ENCODE measurements at regions of chr10 and their contacts with region 1.

Region 1: GRCh38 chr10:103888113-103888841 is 29.7 kb downstream of the STN1 start:
- DNase-seq: no peak
- ATAC-seq: peak; percentile 80
- H3K4me3 Mint-ChIP-seq: no peak overlapping the region
- H3K27ac Mint-ChIP-seq: peak overlapping the region; percentile 20
- H3K4me1 Mint-ChIP-seq: peaks cover 36% of the 10 kb centered on the region
- H3K27me3 Mint-ChIP-seq: no peaks in the 10 kb centered on the region

Region 2: DNA sequence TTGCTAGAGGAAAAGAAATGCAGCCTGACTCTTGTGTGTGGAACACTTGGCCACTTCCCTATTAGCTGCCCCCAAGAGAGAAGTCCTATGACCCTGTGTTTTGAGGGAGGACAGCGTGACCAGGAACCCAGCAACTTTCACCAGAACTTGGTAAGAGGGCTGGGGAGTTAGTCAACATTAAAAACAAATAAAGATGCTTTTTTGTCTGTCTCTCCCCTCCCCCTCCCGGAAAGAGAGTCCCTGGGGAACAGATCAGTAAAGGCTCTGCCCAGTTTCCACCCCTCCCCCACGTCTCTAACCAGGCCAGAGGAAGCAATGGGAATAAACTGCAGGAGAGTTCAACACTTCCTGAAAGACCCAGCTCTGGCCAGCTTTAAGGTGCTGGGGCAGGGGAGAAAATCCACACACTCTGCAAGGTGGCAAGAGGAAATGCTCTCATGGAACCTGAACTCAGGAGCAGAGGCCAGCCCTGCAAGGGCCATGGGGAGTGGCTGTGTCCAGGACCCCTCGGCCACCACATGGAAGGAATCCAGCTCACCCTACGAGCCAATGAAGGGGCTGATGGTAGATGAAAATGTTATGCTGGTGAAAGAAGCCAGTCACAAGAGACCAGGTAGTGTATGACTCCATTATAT is 54.4 kb before region 1 on chr10:
- CTCF ChIA-PET with region 1: no interaction called
- DNase-seq: no peak
- ATAC-seq: no peak
- H3K4me3 Mint-ChIP-seq: no peak overlapping the region
- H3K27ac Mint-ChIP-seq: no peak overlapping the region
- H3K4me1 Mint-ChIP-seq: no peaks in the 10 kb centered on the region
- H3K27me3 Mint-ChIP-seq: peaks cover 22% of the 10 kb centered on the region

Region 3: GRCh38 chr10:103901299-103901698 is 13.0 kb after region 1 on chr10:
- CTCF ChIA-PET with region 1: interaction called, 13 read pairs
- DNase-seq: no peak
- ATAC-seq: peak; percentile 81
- H3K4me3 Mint-ChIP-seq: peak overlapping the region; percentile 55
- H3K27ac Mint-ChIP-seq: peak overlapping the region; percentile 79
- H3K4me1 Mint-ChIP-seq: peaks cover 47% of the 10 kb centered on the region
- H3K27me3 Mint-ChIP-seq: no peaks in the 10 kb centered on the region

Region 4: GRCh38 chr10:103918053-103918846 is 30.0 kb after region 1 on chr10 and contains the start of gene STN1:
- CTCF ChIA-PET with region 1: interaction called, 11 read pairs
- DNase-seq: peak; percentile 98
- ATAC-seq: peak; percentile 94
- H3K4me3 Mint-ChIP-seq: peak within 1 kb of the TSS; percentile 99
- H3K27ac Mint-ChIP-seq: peak within 1 kb of the TSS; percentile 96
- H3K4me1 Mint-ChIP-seq: peaks cover 31% of the 10 kb centered on the region
- H3K27me3 Mint-ChIP-seq: no peaks in the 10 kb centered on the region
- total RNA-seq, gene STN1: 37.5 to 52.0 TPM

Region 5: GRCh38 chr10:104080762-104081161 is 192.5 kb after region 1 on chr10:
- CTCF ChIA-PET with region 1: interaction called, 28 read pairs
- DNase-seq: no peak
- ATAC-seq: peak; percentile 49
- H3K4me3 Mint-ChIP-seq: no peak overlapping the region
- H3K27ac Mint-ChIP-seq: no peak overlapping the region
- H3K4me1 Mint-ChIP-seq: no peaks in the 10 kb centered on the region
- H3K27me3 Mint-ChIP-seq: no peaks in the 10 kb centered on the region

Measured in activated CD8-positive, alpha-beta memory T cell treated with anti-CD3 and anti-CD28 coated beads, Interleukin-2, amount 10 ng/mL, durations not matched to agents 7 days and 5 days (primary cell).